Activated CD4-positive, alpha-beta T cell treated with anti-CD3 and anti-CD28 coated beads, Interleukin-2, amount 10 ng/mL, durations not matched to agents 7 days and 5 days (primary cell): ENCODE measurements at regions of chr16 and their contacts with region 1.

Region 1: GRCh38 chr16:70407811-70408274 is 31.1 kb downstream of the ST3GAL2 start:
- DNase-seq: no peak
- H3K4me3 Mint-ChIP-seq: no peak overlapping the region
- H3K27ac Mint-ChIP-seq: no peak overlapping the region
- H3K4me1 Mint-ChIP-seq: peaks cover 57% of the 10 kb centered on the region
- H3K27me3 Mint-ChIP-seq: no peaks in the 10 kb centered on the region

Region 2: GRCh38 chr16:70298988-70299938 is 108.6 kb before region 1 on chr16 and contains the start of gene DDX19B:
- CTCF ChIA-PET with region 1: no interaction called
- POLR2A ChIA-PET with region 1: no interaction called
- DNase-seq: peak; percentile 72
- H3K4me3 Mint-ChIP-seq: peak within 1 kb of the TSS; percentile 90
- H3K27ac Mint-ChIP-seq: peak within 1 kb of the TSS; percentile 95
- H3K4me1 Mint-ChIP-seq: peaks cover 40% of the 10 kb centered on the region
- H3K27me3 Mint-ChIP-seq: no peaks in the 10 kb centered on the region
- total RNA-seq, gene DDX19B: 29.0 to 29.9 TPM

Region 3: GRCh38 chr16:70320121-70320520 is 87.7 kb before region 1 on chr16:
- CTCF ChIA-PET with region 1: no interaction called
- POLR2A ChIA-PET with region 1: no interaction called
- DNase-seq: no peak
- H3K4me3 Mint-ChIP-seq: no peak overlapping the region
- H3K27ac Mint-ChIP-seq: no peak overlapping the region
- H3K4me1 Mint-ChIP-seq: no peaks in the 10 kb centered on the region
- H3K27me3 Mint-ChIP-seq: no peaks in the 10 kb centered on the region

Region 4: DNA sequence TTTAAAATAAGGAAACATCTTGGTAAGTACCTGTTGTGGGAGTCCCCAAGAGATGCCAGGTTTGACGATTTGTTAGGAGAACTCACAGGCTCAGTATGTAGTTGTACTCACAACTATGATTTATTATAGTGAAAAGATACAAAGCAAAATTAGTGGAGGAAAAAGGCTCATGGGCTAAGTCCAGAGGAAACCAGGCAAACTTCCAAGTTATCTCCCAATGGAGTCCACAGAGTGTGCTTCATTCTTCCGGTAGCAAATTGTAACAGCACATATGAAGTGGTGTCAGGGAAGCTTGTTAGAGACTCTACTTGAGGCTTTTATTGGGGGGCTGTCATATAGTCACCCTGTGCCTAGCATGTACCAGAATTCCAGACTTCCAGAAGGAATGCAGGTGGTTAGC is 58.9 kb before region 1 on chr16:
- CTCF ChIA-PET with region 1: interaction called, 4 read pairs
- POLR2A ChIA-PET with region 1: interaction called, 13 read pairs
- DNase-seq: no peak
- H3K4me3 Mint-ChIP-seq: no peak overlapping the region
- H3K27ac Mint-ChIP-seq: peak overlapping the region; percentile 17
- H3K4me1 Mint-ChIP-seq: peaks cover 33% of the 10 kb centered on the region
- H3K27me3 Mint-ChIP-seq: no peaks in the 10 kb centered on the region

Region 5: GRCh38 chr16:70393626-70394025 is 14.2 kb before region 1 on chr16:
- CTCF ChIA-PET with region 1: interaction called, 10 read pairs
- POLR2A ChIA-PET with region 1: no interaction called
- DNase-seq: no peak
- H3K4me3 Mint-ChIP-seq: no peak overlapping the region
- H3K27ac Mint-ChIP-seq: no peak overlapping the region
- H3K4me1 Mint-ChIP-seq: no peaks in the 10 kb centered on the region
- H3K27me3 Mint-ChIP-seq: no peaks in the 10 kb centered on the region

Region 6: DNA sequence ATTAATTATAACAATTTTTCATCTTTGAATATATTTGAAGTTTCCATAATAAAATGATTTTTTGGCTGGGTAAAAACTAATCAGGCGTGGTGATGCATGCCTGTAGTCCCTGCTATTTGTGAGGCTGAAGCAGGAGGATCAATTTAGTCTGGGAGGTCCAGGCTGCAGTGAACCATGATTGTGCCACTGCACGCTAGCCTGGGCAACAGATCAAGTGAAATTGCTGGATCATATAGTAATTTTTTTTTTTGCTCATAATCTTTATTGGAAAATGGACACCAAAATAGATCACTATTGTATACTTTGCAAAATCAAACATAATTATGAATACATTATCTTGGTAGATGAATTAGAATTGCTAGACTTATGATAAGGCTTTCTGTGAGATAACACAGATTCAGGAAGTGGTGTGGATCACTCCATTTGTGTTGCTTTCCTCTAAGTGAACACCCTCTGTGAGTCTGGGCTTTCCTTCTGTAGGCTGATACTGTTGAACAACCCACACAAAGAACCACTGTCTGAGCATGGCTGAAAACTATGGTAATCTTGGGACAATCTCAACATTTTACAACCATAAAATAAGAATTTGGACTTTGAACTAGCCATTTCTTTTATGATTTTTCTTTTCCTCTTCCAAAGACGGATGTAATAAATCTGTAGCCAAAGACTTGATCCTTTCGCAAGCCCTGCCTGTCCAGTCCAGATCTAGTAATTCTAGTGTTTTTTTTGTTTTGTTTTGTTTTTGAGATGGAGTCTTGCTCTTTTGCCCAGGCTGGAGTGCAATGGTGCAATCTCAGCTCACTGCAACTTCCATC is 36.6 kb after region 1 on chr16:
- CTCF ChIA-PET with region 1: no interaction called
- POLR2A ChIA-PET with region 1: no interaction called
- DNase-seq: no peak
- H3K4me3 Mint-ChIP-seq: no peak overlapping the region
- H3K27ac Mint-ChIP-seq: no peak overlapping the region
- H3K4me1 Mint-ChIP-seq: peaks cover 8% of the 10 kb centered on the region
- H3K27me3 Mint-ChIP-seq: peaks cover 3% of the 10 kb centered on the region